Head of caudate nucleus (tissue), 42 donors: ENCODE measurements at regions of chr15 and their contacts with region 1.

Region 1: GRCh38 chr15:29740692-29741311 is 81.5 kb downstream of the TJP1 start:
- DNase-seq: no peak

Region 2: DNA sequence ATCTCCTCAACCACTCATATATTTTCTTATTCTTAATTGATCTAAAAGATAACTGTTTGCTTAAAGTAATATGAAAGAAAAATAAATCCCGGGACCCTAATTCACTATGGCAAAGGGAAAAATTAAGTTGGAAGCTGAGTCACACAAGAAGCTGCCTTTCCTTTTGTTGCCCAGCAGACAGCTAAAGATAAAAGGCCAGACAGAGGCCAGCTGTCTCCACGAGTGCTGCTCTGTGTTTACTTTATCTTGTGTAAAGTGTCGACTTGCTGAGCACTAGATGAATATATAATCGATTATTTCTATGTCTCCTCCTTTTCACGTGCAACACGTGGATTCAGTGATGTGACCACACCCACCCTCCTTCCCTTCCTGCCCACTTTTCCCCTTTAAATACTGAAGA is 418.4 kb before region 1 on chr15:
- intact Hi-C with region 1: no loop called
- DNase-seq: no peak

Region 3: GRCh38 chr15:29676961-29677402 is 63.8 kb before region 1 on chr15:
- intact Hi-C with region 1: no loop called
- DNase-seq: peak in 5 of 42 donors; percentile 4 to 35 (median 11)

Region 4: DNA sequence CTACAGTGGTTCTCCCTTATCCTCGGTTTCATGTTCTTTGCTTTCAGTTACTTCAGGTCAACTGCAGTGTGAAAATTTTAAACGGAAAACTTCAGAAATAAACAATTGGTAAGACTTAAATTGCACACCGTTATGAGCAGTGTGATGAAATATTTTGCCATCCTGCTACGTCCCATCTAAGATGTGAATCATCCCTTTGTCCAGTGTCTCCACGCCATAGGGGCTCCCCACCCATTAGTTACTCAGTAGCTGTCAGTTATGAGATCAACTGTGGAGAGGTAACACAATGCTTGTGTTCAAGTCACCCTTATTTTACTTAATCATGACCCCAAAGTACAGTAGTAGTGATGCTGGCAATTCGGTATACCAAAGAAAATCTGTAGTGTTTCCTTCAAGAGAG is 34.1 kb after region 1 on chr15:
- intact Hi-C with region 1: loop called (anchors 5 kb)
- DNase-seq: no peak

Region 5: DNA sequence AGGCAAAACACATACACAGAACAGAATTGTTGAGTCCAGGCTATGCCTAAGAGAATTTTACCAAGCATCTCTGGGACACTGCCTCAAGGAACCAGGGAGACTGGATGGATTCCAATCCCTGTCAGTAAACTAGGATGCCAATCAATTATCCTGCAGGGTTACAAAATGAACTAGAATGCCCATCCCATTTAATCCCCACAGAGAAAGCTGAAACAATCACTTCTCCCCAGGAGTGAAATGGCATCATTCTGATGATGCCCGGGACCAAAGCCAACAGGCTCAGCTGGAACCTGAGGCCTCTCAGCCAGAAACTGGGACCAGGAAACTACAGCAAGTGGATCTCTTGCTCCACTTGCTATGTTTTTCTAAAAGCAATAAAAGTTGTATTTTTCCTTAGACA is 211.4 kb after region 1 on chr15:
- intact Hi-C with region 1: no loop called
- DNase-seq: peak; percentile 46 to 92 (median 77)